B cell (primary cell): ENCODE measurements at regions of chr10 and their contacts with region 1.

Region 1: DNA sequence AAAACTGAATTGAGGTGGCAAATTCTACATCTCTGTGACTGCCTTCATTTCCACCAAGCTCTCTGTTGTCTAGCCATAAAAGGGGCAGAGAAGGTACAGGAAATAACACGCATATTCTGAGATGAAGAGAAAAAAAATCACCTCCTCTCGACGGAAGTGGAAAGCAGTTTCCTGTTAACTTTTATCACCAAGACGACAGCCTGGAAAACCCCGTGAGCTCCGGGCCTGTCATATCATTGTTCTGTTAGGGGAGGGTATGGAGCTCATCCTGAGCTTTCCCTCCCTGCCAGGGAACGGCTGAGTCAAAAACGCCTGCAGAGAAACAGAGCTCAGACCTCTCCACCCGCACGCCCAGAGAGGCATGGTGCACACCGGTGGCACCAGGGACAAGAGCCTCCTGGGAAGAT is 200.3 kb downstream of the PRPF18 start:
- DNase-seq: peak; percentile 89
- ATAC-seq: peak; percentile 80
- H3K4me3 ChIP-seq: peak overlapping the region in 4 of 5 experiments; percentile 16 to 56 (median 40)
- H3K4me3 Mint-ChIP-seq: peak overlapping the region; percentile 83
- H3K27ac ChIP-seq: peak overlapping the region; percentile 90 to 97
- H3K27ac Mint-ChIP-seq: peak overlapping the region; percentile 92
- H3K4me1 ChIP-seq: peaks cover 37 to 46% of the 10 kb centered on the region in 2 donors
- H3K4me1 Mint-ChIP-seq: peaks cover 49% of the 10 kb centered on the region
- H3K27me3 ChIP-seq: no peaks in the 10 kb centered on the region
- H3K27me3 Mint-ChIP-seq: no peaks in the 10 kb centered on the region
- CTCF ChIP-seq: no peak

Region 2: DNA sequence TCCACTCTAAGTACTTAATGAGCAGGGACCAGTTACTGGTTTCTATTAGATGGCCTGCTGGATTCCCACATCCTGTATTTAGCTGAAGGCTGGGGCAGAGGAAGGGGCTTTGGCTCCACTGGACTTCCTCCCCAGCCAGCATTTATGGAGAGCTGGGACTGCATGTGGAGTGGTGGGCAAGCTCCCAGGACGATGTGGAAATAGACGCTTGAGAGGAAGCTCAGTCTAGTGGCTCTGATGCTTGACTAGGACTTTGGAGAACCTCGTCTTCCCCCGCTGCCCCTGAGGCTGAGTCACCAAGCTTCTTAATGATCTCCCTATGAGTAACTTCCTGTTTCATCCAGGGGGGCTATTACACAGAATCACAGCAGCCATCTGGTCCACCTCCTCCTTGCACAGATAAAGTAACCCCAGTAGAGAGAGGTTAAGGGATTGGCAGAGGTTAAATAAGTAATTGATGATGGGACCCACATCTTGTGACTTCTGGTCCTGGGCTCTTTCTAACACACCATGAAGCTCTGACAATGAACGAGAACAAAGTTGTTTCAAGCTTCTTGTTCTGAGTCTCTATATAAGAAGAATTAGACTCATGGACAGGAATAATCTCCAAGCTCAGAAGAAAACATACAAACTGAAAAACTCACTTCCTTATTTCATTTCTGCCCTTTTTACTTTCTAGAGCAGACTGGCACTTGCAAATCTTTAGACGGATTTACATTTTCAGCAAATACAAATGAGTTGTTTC is 74.0 kb before region 1 on chr10:
- CTCF ChIA-PET with region 1: no interaction called
- POLR2A ChIA-PET with region 1: no interaction called
- intact Hi-C with region 1: loop called (anchors 2 kb)
- DNase-seq: peak; percentile 60
- ATAC-seq: peak; percentile 86
- H3K4me3 ChIP-seq: peak overlapping the region in 1 of 5 experiments; percentile 16
- H3K4me3 Mint-ChIP-seq: peak overlapping the region; percentile 61
- H3K27ac ChIP-seq: peak overlapping the region; percentile 11 to 41
- H3K27ac Mint-ChIP-seq: peak overlapping the region; percentile 88
- H3K4me1 ChIP-seq: peaks cover 20 to 26% of the 10 kb centered on the region in 2 donors
- H3K4me1 Mint-ChIP-seq: peaks cover 30% of the 10 kb centered on the region
- H3K27me3 ChIP-seq: peaks cover 0 to under 1% (median 0%) of the 10 kb centered on the region in 4 experiments
- H3K27me3 Mint-ChIP-seq: no peaks in the 10 kb centered on the region
- CTCF ChIP-seq: no peak

Region 3: GRCh38 chr10:13873196-13873595 is 86.2 kb after region 1 on chr10:
- CTCF ChIA-PET with region 1: no interaction called
- POLR2A ChIA-PET with region 1: no interaction called
- intact Hi-C with region 1: loop called (anchors 5 kb)
- DNase-seq: peak; percentile 69
- ATAC-seq: peak; percentile 69
- H3K4me3 ChIP-seq: peak overlapping the region in 1 of 5 experiments; percentile 33
- H3K4me3 Mint-ChIP-seq: peak overlapping the region; percentile 62
- H3K27ac ChIP-seq: peak overlapping the region; percentile 75 to 79
- H3K27ac Mint-ChIP-seq: peak overlapping the region; percentile 66
- H3K4me1 ChIP-seq: peaks cover 25 to 27% of the 10 kb centered on the region in 2 donors
- H3K4me1 Mint-ChIP-seq: peaks cover 37% of the 10 kb centered on the region
- H3K27me3 ChIP-seq: no peaks in the 10 kb centered on the region
- H3K27me3 Mint-ChIP-seq: no peaks in the 10 kb centered on the region
- CTCF ChIP-seq: no peak

Region 4: DNA sequence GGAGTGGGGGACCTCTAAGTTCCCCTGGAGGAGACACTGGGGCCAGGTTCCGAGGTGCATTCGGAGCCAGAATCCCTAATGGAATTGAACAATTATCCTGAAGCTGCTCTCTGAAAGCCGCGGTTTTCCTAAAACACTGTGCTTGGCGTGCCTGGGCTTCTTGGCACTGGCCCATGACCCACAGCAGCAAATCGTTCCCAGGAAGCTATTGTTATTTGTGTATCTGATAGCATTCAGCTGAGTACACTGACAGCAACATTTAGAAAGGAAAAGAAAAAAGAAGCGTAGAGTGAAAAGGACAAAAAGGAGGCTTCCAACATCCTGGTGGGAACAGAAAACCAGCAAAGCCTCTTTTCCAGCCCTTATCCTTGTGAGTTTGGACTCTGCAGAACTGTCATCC is 203.9 kb after region 1 on chr10:
- CTCF ChIA-PET with region 1: interaction called, 6 read pairs
- POLR2A ChIA-PET with region 1: no interaction called
- intact Hi-C with region 1: loop called (anchors 10 kb)
- DNase-seq: no peak
- ATAC-seq: no peak
- H3K4me3 ChIP-seq: no peak overlapping the region
- H3K4me3 Mint-ChIP-seq: no peak overlapping the region
- H3K27ac ChIP-seq: no peak overlapping the region
- H3K27ac Mint-ChIP-seq: peak overlapping the region; percentile 59
- H3K4me1 ChIP-seq: peaks cover 25 to 27% of the 10 kb centered on the region in 2 donors
- H3K4me1 Mint-ChIP-seq: peaks cover 37% of the 10 kb centered on the region
- H3K27me3 ChIP-seq: no peaks in the 10 kb centered on the region
- H3K27me3 Mint-ChIP-seq: no peaks in the 10 kb centered on the region
- CTCF ChIP-seq: no peak

Region 5: DNA sequence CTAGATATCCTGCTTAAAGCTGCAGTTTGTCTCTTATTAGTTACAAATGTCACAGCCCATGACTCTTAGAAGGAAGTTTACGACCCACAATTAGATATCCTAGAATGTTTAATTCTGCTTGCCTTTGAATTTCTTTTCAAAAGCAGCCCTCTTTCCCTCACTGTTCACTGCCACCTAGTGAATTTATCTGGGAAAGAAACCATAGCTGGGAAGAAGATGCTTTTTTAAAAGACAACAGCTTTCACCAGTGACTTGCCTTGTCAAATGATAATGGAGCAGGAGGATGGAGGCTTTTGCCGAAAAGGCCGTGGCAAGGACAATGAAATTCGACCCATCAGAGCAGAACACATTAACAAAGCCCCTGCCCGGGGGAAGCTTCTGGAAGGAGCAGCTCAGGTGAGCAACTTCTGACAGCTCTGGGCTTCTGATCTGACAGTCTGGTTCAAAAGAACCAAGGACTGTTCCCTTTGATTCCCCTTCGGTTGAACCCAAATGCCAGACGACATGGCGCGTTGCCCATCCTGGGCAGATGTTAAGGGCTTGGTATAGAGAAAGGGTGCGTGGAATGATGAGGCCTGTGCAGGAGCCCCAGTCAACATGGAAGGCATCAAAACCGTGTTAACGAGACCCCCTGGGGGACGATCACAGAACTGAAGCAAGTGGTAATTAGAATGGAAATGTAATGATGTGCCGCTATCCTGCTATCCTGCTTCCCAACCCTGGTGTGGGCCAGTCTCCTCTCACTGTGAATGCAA is 306.9 kb after region 1 on chr10:
- CTCF ChIA-PET with region 1: interaction called, 10 read pairs
- POLR2A ChIA-PET with region 1: no interaction called
- intact Hi-C with region 1: loop called (anchors 10 kb)
- DNase-seq: no peak
- ATAC-seq: no peak
- H3K4me3 ChIP-seq: no peak overlapping the region
- H3K4me3 Mint-ChIP-seq: no peak overlapping the region
- H3K27ac ChIP-seq: no peak overlapping the region
- H3K27ac Mint-ChIP-seq: no peak overlapping the region
- H3K4me1 ChIP-seq: no peaks in the 10 kb centered on the region
- H3K4me1 Mint-ChIP-seq: peaks cover 3% of the 10 kb centered on the region
- H3K27me3 ChIP-seq: no peaks in the 10 kb centered on the region
- H3K27me3 Mint-ChIP-seq: peaks cover under 1% of the 10 kb centered on the region
- CTCF ChIP-seq: no peak

Region 6: GRCh38 chr10:14200698-14201544 is 413.9 kb after region 1 on chr10:
- CTCF ChIA-PET with region 1: interaction called, 10 read pairs
- POLR2A ChIA-PET with region 1: no interaction called
- intact Hi-C with region 1: no loop called
- DNase-seq: no peak
- ATAC-seq: no peak
- H3K4me3 ChIP-seq: no peak overlapping the region
- H3K4me3 Mint-ChIP-seq: no peak overlapping the region
- H3K27ac ChIP-seq: no peak overlapping the region
- H3K27ac Mint-ChIP-seq: no peak overlapping the region
- H3K4me1 ChIP-seq: no peaks in the 10 kb centered on the region
- H3K4me1 Mint-ChIP-seq: no peaks in the 10 kb centered on the region
- H3K27me3 ChIP-seq: peaks cover 0 to 9% (median 2%) of the 10 kb centered on the region in 4 experiments
- H3K27me3 Mint-ChIP-seq: peaks cover 29% of the 10 kb centered on the region
- CTCF ChIP-seq: no peak